ENCODE measurements at regions of chr2 and their contacts with region 1.

Region 1: GRCh38 chr2:42102024-42102590 is 54.3 kb downstream of the PKDCC start:
- DNase-seq: peak; percentile 86 to 98 (median 92)
- ATAC-seq: peak; percentile 72
- H3K4me3 ChIP-seq: peak overlapping the region; percentile 51
- H3K4me3 Mint-ChIP-seq: peak overlapping the region; percentile 88
- H3K27ac ChIP-seq: peak overlapping the region; percentile 99 to 100
- H3K27ac Mint-ChIP-seq: no peak overlapping the region
- H3K4me1 ChIP-seq: peaks cover 98% of the 10 kb centered on the region
- H3K4me1 Mint-ChIP-seq: peaks cover 37% of the 10 kb centered on the region
- H3K27me3 ChIP-seq: no peaks in the 10 kb centered on the region
- H3K27me3 Mint-ChIP-seq: no peaks in the 10 kb centered on the region
- CTCF ChIP-seq: no peak

Region 2: DNA sequence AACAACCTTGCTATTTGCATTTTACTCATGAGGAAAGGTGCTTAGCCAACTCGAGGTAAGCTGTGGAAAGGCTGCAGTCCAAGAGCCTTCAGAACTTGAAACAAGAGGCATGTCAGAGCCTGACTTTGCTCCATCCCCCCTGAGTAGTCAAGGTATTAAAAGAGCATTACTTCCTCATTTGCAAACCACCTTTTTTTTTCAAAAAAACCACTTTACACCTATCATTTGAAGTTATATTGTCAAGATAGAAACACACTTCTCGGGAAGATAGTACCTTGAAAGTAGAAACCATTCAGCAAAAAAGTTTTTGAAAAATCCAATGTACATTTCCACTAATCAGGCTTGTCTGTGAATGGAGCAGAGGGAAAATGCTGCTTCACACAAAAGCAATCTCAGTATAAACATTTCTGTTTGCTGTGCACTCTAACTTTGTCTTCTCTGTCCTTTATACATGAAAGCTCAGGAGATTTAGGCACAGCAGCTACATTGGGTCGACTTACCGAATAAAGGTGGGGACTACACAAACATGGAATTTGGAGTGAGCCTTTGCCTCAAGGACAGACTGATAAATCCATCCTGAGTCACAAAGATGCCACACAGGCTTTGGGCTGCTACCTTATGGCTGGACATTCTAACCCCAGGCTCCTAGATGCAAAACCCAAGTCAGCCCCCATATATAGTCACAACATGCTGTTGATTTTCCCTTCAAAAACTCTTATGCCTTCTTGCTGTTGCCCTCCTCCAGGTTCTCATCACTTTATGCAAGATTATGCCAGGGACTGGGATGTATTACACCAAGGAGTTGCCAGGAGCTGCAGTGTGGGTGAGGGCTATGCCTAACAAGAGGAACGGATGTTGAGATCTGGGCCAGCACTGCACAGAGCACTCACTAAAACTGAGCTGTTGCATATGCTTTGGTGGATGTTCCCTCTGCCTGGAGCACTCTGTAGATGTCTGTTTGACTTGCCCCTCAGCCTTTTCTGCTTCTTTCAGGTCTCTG is 25.6 kb after region 1 on chr2:
- CTCF ChIA-PET with region 1: interaction called, 7 read pairs
- POLR2A ChIA-PET with region 1: interaction called, 255 read pairs
- intact Hi-C with region 1: loop called (anchors 1 to 2 kb)
- DNase-seq: peak in 10 of 14 experiments; percentile 20 to 77 (median 40)
- ATAC-seq: peak; percentile 45
- H3K4me3 ChIP-seq: peak overlapping the region; percentile 2
- H3K4me3 Mint-ChIP-seq: peak overlapping the region; percentile 83
- H3K27ac ChIP-seq: peak overlapping the region; percentile 56 to 62
- H3K27ac Mint-ChIP-seq: peak overlapping the region; percentile 86
- H3K4me1 ChIP-seq: peaks cover 94% of the 10 kb centered on the region
- H3K4me1 Mint-ChIP-seq: peaks cover 91% of the 10 kb centered on the region
- H3K27me3 ChIP-seq: no peaks in the 10 kb centered on the region
- H3K27me3 Mint-ChIP-seq: no peaks in the 10 kb centered on the region
- CTCF ChIP-seq: no peak

Region 3: GRCh38 chr2:42141687-42142546 is 39.8 kb after region 1 on chr2:
- CTCF ChIA-PET with region 1: interaction called, 6 read pairs
- POLR2A ChIA-PET with region 1: interaction called, 180 read pairs
- intact Hi-C with region 1: no loop called
- DNase-seq: peak in 10 of 14 experiments; percentile 11 to 60 (median 36)
- ATAC-seq: peak; percentile 78
- H3K4me3 ChIP-seq: no peak overlapping the region
- H3K4me3 Mint-ChIP-seq: peak overlapping the region; percentile 65
- H3K27ac ChIP-seq: peak overlapping the region; percentile 18 to 19
- H3K27ac Mint-ChIP-seq: peak overlapping the region; percentile 85
- H3K4me1 ChIP-seq: peaks cover 60% of the 10 kb centered on the region
- H3K4me1 Mint-ChIP-seq: peaks cover 57% of the 10 kb centered on the region
- H3K27me3 ChIP-seq: no peaks in the 10 kb centered on the region
- H3K27me3 Mint-ChIP-seq: no peaks in the 10 kb centered on the region
- CTCF ChIP-seq: no peak

Region 4: GRCh38 chr2:42183775-42184174 is 81.7 kb after region 1 on chr2:
- CTCF ChIA-PET with region 1: no interaction called
- POLR2A ChIA-PET with region 1: interaction called, 15 read pairs
- intact Hi-C with region 1: no loop called
- DNase-seq: peak in 2 of 14 experiments; percentile 24 to 42
- ATAC-seq: no peak
- H3K4me3 ChIP-seq: no peak overlapping the region
- H3K4me3 Mint-ChIP-seq: no peak overlapping the region
- H3K27ac ChIP-seq: no peak overlapping the region
- H3K27ac Mint-ChIP-seq: peak overlapping the region; percentile 46
- H3K4me1 ChIP-seq: peaks cover 42% of the 10 kb centered on the region
- H3K4me1 Mint-ChIP-seq: peaks cover 87% of the 10 kb centered on the region
- H3K27me3 ChIP-seq: no peaks in the 10 kb centered on the region
- H3K27me3 Mint-ChIP-seq: no peaks in the 10 kb centered on the region
- CTCF ChIP-seq: no peak

Region 5: DNA sequence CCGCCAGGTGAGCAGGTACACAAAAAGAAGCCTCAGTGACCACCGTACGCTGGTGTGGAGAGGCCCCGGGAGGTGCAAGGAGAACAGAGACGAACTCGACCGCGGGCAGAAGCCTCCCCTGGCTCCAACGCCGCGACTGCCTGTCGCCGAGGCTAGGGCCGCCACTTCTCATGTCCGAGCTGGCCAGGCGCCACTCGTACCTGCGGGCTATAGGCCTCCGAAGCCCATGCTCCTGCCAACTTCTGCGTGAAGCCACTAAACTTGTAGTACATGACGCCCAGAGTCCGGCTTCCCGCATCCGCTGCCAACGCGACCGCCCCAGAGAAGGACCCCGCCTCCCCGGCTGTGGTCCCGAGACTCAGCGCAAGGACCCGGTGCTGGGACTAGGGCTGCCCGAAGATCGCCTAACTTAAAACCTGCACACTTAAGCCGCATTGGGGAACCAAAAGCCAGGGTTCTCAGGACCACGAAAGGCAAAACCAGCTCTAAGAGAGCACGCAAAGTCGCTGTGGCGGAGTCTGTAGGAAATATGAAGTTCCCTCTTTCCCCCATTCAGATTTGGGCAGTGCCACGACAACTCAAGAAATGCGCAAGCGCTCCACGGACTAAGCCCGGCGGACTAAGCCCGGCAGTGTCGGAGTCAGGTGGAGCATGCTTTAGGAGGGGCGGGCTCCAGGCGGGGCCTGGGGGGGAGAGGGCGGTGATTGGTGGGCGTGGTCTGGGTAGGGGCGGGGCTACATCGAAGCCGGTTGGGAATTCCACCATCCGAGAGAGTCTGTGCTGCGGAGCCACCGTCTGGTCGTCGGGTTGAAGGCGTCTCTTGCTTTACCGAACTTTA is 259.0 kb after region 1 on chr2 and contains the start of gene COX7A2L:
- CTCF ChIA-PET with region 1: interaction called, 3 read pairs
- POLR2A ChIA-PET with region 1: interaction called, 8 read pairs
- intact Hi-C with region 1: loop called (anchors 5 to 10 kb)
- DNase-seq: peak; percentile 93 to 98 (median 96)
- ATAC-seq: peak; percentile 91
- H3K4me3 ChIP-seq: peak within 1 kb of the TSS; percentile 88
- H3K4me3 Mint-ChIP-seq: peak within 1 kb of the TSS; percentile 88
- H3K27ac ChIP-seq: peak within 1 kb of the TSS; percentile 91 to 96
- H3K27ac Mint-ChIP-seq: peak within 1 kb of the TSS; percentile 99
- H3K4me1 ChIP-seq: peaks cover 34% of the 10 kb centered on the region
- H3K4me1 Mint-ChIP-seq: peaks cover 45% of the 10 kb centered on the region
- H3K27me3 ChIP-seq: no peaks in the 10 kb centered on the region
- H3K27me3 Mint-ChIP-seq: no peaks in the 10 kb centered on the region
- CTCF ChIP-seq: no peak
- total RNA-seq, gene COX7A2L: 51.3 to 57.3 TPM